Psoas muscle (tissue), 8 donors: ENCODE measurements at regions of chr7 and their contacts with region 1.

Region 1: DNA sequence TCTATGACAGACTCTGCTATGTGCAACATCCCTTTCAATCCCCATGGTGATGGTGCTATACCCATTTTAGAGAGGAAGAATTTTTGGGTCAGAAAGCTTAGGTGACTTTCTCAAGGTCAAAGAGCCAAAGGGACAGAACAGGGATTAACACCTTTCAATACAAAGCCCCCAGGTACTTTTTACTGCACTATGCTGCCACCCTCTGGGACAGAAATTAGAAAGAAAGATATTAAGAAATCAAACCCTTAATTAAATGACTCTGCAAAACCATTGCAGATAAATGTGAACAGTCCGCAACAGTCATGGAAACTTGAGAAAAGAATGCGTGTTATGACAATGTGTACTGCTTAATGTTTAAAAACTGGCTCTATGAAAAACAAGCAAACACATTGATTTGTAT is 673.7 kb downstream of the MAGI2 start:
- DNase-seq: no peak
- ATAC-seq: peak in 1 of 4 donors; percentile 49
- H3K4me3 ChIP-seq: no peak overlapping the region
- H3K27ac ChIP-seq: no peak overlapping the region
- H3K4me1 ChIP-seq: no peaks in the 10 kb centered on the region
- H3K27me3 ChIP-seq: no peaks in the 10 kb centered on the region
- CTCF ChIP-seq: peak; percentile 18

Region 2: GRCh38 chr7:78510580-78511188 is 269.1 kb before region 1 on chr7:
- intact Hi-C with region 1: loop called (anchors 5 to 10 kb)
- DNase-seq: no peak
- ATAC-seq: peak in 3 of 4 donors; percentile 37 to 79 (median 53)
- H3K4me3 ChIP-seq: no peak overlapping the region
- H3K27ac ChIP-seq: no peak overlapping the region
- H3K4me1 ChIP-seq: no peaks in the 10 kb centered on the region
- H3K27me3 ChIP-seq: no peaks in the 10 kb centered on the region
- CTCF ChIP-seq: peak; percentile 66

Region 3: DNA sequence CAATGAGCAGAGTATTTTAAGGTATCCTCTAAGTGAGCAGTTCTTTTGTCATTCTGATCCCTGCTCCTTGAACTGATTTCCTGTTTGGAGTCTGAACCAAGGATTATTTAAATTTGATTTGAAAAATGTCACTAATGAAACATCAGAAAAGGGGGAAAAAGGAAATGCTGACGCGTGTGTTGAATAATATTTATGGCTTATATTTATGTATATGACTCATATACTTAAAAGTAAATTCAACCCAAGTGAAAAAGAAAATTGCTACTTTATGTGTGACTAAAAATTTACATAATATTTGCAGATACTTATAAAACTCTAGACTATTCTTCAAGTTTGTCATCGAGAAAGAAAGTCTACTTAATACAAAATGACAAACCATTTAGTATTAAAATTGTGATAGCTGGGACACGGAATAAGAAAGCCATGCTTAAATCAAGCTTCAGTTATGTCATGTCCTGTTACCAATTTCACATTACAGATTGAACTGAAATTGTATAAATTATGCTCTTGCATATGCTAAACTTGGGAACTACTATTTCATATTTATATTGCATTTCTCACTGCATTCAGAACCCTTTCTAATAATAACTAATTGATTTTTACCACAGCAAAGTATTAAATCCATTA is 23.8 kb after region 1 on chr7:
- intact Hi-C with region 1: no loop called
- DNase-seq: no peak
- ATAC-seq: no peak
- H3K4me3 ChIP-seq: no peak overlapping the region
- H3K27ac ChIP-seq: no peak overlapping the region
- H3K4me1 ChIP-seq: no peaks in the 10 kb centered on the region
- H3K27me3 ChIP-seq: no peaks in the 10 kb centered on the region
- CTCF ChIP-seq: no peak

Region 4: GRCh38 chr7:78924581-78924980 is 144.8 kb after region 1 on chr7:
- intact Hi-C with region 1: loop called in 1 of 2 experiments (anchors 5 kb)
- DNase-seq: no peak
- ATAC-seq: no peak
- H3K4me3 ChIP-seq: no peak overlapping the region
- H3K27ac ChIP-seq: no peak overlapping the region
- H3K4me1 ChIP-seq: no peaks in the 10 kb centered on the region
- H3K27me3 ChIP-seq: no peaks in the 10 kb centered on the region
- CTCF ChIP-seq: peak; percentile 21

Region 5: DNA sequence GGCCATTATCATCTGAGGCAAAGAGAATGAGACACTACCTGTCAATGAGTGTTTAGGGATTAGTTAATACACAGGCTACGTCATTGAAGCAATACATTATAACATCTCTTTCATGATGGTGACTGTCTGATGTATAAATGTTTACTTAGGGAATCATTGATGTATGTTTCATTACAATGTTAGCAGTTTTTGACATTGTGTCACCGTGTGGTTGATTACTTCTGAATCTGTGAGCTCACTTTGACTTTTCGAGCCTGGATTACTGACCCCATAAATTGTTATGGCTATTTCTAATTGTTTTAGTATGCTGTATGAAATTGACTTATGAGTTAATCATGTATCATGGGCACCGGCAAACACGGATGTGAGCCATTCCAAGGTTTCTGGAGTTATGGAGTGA is 179.7 kb after region 1 on chr7:
- intact Hi-C with region 1: no loop called
- DNase-seq: no peak
- ATAC-seq: no peak
- H3K4me3 ChIP-seq: no peak overlapping the region
- H3K27ac ChIP-seq: no peak overlapping the region
- H3K4me1 ChIP-seq: no peaks in the 10 kb centered on the region
- H3K27me3 ChIP-seq: no peaks in the 10 kb centered on the region
- CTCF ChIP-seq: no peak